Right ventricle myocardium inferior (tissue), 1 donor: ENCODE measurements at regions of chr17 and their contacts with region 1.

Region 1: DNA sequence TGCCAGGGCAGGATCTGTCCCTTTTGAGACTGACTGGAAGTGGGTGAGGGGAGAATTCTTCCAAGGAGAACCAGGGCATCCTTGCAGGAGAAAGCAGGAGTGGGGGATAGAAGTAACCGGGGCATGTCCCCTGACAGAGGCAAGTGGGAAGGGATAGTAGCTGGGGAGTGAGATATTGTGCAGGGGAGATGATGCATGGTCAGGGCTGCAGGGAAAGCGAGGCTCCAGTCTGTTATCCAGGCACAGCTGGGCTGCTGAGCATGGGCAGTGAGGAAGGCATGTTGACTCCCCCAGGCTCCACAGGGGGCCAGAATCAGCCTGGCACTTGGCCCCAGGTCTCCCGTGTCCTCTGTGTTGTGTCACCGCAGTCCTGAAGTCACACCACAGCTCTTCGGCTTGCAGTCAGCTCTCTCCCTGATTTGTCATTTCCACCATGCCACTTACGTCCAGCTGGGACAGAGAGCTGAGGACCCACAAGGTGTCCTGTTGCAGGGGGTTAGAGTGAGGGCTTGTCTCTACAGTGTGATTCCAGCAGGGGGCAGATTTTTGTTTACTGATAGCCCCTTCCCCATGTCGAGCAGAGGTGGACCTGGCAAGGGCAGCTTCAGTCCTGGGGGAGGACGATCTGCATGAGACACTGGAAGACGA is 40.9 kb downstream of the B9D1 start:
- DNase-seq: no peak
- ATAC-seq: peak; percentile 9

Region 2: DNA sequence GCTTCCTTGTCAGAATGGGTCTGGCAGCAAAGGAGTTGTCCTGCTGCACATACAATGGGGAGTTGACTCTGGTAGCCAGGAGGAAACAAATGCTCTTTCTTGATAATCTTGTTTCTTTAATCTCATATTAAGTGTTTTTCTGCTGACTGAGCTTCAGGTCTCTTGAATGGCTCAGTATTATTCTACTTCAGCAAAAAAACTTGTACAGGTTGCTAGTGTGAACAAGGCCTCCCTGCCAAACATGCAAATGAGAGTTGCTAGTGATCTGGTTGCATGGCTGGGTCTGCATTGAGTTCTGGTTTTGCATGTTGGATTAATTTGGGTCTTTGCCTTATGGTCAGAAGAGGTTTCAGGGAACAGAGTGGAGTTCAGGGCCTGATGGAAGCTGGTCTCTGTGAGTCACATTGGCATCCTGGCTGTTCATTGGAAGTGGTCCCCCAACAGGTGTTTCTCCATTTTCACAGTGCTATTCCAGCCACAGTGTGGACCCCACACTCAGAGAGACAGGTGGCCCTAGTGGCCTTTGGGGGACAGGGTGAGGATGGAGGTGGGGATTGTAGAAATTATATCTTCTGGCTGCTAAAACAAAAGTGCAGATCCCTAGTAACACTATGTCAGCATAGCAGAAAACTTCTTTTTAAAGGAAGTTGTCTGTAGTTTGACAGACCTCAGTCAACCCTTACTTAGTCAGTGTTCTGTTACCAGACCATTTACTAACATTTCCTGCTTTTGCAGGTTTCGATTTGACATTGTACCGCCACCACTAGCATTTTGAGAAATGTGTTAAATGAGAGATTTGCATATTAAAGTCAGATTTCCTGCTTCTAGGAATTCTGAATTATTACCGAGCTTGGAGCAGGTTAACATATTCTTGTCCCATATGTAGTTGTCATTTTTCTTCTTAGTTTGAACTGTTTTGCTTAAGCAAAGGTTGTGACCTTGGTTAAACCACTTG is 37.3 kb before region 1 on chr17:
- intact Hi-C with region 1: no loop called
- DNase-seq: no peak
- ATAC-seq: no peak

Region 3: GRCh38 chr17:19336938-19337711 is 15.5 kb after region 1 on chr17:
- intact Hi-C with region 1: loop called (anchors 2 kb)
- DNase-seq: peak; percentile 45
- ATAC-seq: peak; percentile 35